HEK293 (cell line): ENCODE measurements at regions of chr2 and their contacts with region 1.

Region 1: GRCh38 chr2:43542285-43542937 is 53.4 kb downstream of the THADA start:
- H3K4me3 ChIP-seq: no peak overlapping the region
- H3K27ac ChIP-seq: no peak overlapping the region
- H3K4me1 ChIP-seq: no peaks in the 10 kb centered on the region
- CTCF ChIP-seq: no peak

Region 2: DNA sequence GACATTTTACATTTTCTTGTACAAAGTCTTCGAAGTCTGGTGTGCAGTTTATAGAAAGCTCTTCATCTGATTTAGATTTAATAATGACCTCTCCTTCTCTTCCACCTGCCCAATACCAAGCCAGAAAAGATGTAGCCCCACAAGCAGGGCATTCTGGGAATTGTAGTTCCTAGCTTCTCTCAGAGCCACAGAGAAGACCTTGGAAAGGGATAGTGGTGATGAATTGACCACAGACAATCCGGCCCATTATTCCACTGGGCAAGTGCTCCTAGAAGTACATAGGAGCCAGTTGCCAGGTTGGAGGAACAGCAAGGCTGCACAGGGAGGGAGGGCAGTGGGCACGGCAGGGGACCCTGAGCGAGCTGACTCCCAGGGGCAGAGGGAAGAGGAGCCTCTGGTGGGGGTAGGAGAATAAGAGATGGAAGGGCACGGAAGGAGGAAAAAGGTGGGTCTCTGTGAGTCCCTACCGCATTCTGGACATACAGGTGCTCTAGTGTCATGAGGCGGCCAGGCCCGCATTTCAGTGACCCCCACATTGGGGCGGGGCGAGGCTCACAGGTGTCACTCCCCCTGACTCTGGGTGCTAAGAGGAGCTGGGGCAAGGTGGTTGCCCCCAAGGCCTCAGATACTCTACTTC is 597.5 kb before region 1 on chr2:
- CTCF ChIA-PET with region 1: interaction called, 14 read pairs
- POLR2A ChIA-PET with region 1: no interaction called
- H3K4me3 ChIP-seq: no peak overlapping the region
- H3K27ac ChIP-seq: no peak overlapping the region
- H3K4me1 ChIP-seq: no peaks in the 10 kb centered on the region
- CTCF ChIP-seq: no peak